Prostate gland (tissue), 2 donors: ENCODE measurements at regions of chr3 and their contacts with region 1.

Region 1: DNA sequence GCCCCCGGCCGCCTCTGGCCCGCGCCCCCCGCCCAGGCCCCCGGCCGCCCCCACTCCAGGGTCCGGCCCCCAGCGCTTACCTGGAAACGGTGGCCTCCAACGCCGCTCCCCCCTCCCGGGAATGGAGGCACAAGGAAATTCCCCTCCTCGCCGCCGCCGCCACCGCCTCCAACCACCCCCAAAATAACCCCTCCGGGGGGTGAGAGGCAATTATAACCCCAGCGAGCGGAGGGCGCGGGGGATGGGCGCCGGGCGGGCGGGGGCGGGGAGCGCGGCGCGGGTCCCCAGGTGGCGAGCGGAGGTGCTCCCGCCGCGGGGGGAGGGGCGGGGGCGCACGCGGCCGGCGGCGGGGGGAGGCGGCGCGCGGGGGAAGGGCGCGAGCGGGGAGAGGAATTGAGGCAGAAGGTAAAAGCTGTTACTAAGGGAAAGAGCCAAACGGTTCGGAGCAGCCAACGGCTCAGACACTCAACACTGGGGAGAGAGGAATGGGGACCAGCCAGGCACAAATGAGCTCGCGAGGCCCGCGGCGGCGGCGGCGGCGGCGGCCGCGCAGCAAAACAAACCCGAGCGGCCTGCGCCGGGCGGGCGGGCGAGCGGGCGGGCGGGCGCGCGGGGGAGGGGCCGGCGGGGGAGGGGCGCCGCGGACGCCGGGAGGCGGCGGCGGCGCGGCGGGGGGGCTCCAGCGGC is at the start of gene TBL1XR1:
- DNase-seq: peak; percentile 91
- H3K4me3 ChIP-seq: peak within 1 kb of the TSS; percentile 86 to 100
- H3K27ac ChIP-seq: peak within 1 kb of the TSS; percentile 97 to 99
- H3K4me1 ChIP-seq: no peaks in the 10 kb centered on the region
- H3K27me3 ChIP-seq: no peaks in the 10 kb centered on the region
- CTCF ChIP-seq: no peak
- POLR2A ChIP-seq: no peak
- total RNA-seq, gene TBL1XR1: 75.8 to 156 TPM

Region 2: DNA sequence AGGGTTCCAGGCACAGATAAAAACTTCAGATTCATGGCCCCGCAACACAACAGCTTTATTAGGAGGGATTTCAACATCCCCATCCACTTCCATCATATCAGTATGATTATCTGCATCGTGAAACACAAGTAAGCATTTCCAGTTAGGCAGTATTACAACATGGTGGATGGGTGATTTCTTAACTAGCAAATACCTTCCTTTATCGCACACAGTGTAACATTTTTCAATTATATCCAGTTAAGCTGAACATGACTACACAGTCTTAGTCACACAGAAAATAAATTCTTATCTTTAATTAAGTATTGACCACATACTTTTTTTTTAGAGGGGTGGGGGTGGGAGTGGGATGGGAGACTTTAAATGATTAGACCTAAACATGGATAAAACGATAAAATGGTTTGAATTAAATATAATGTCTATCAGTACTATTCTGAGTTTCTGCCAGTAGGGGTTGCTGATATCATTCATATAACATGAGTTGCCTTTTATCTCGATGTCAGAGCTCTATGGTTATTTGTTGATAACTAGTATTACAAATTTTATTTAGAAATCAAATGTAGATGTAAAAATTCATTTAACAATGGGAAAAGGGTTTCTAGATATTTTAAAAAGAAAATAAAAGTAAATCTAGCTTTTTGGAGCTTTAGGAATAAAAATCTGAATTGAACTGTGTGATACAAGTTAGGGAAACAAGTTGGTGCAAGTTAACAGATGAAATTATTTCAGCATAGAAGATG is 146.5 kb before region 1 on chr3:
- intact Hi-C with region 1: loop called (anchors 5 kb)
- DNase-seq: no peak
- H3K4me3 ChIP-seq: no peak overlapping the region
- H3K27ac ChIP-seq: no peak overlapping the region
- H3K4me1 ChIP-seq: peaks cover 10% of the 10 kb centered on the region
- H3K27me3 ChIP-seq: no peaks in the 10 kb centered on the region
- CTCF ChIP-seq: peak; percentile 22 to 79 (median 66)
- POLR2A ChIP-seq: no peak

Region 3: GRCh38 chr3:177294221-177294620 is 97.0 kb after region 1 on chr3:
- intact Hi-C with region 1: loop called (anchors 5 kb)
- DNase-seq: no peak
- H3K4me3 ChIP-seq: no peak overlapping the region
- H3K27ac ChIP-seq: no peak overlapping the region
- H3K4me1 ChIP-seq: no peaks in the 10 kb centered on the region
- H3K27me3 ChIP-seq: no peaks in the 10 kb centered on the region
- CTCF ChIP-seq: no peak
- POLR2A ChIP-seq: no peak

Region 4: DNA sequence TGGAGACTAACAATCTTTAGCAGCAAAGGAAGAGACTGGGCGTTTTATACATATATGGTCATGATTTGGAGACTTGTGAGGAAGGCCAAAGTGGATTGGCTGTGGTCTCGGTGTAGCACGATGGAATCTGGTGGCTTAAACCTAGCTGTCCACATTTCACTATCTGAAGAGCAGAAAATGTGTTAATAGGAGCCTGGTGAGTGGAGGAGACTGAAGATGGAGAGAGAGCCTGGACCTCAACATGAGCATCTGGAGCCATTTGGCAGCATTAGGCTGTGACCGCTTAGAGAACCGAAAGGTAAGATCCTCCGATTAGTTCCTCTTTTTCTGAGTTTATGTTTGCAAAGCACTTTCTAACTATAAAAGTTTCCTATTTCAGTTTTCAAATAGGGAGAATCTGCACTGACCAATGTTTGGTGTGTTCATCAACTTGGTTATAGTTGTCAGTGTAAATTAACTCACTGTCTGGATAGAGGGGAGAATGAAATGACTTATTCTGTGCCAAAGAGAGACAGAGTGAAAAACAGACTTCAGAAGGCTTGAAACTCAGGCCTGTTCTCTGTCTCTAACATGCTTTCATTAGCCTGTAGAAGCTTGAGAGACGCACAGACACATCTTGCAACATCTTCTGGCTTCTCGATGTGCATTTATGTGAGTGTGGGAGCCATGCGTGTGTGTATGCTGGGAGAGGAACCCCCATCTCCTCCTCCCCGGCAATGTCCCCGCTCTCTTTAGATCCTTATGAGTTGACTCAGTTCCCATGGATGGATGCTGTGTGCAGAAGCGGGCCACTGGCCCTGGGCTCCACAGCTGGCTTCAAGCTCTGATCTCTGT is 244.8 kb after region 1 on chr3:
- intact Hi-C with region 1: loop called (anchors 5 kb)
- DNase-seq: no peak
- H3K4me3 ChIP-seq: peak overlapping the region in 1 of 2 donors; percentile 12
- H3K27ac ChIP-seq: peak overlapping the region; percentile 57 to 66
- H3K4me1 ChIP-seq: no peaks in the 10 kb centered on the region
- H3K27me3 ChIP-seq: no peaks in the 10 kb centered on the region
- CTCF ChIP-seq: no peak
- POLR2A ChIP-seq: no peak

Region 5: GRCh38 chr3:177816667-177817208 is 619.6 kb after region 1 on chr3:
- intact Hi-C with region 1: loop called (anchors 10 kb)
- DNase-seq: peak; percentile 46
- H3K4me3 ChIP-seq: no peak overlapping the region
- H3K27ac ChIP-seq: no peak overlapping the region
- H3K4me1 ChIP-seq: peaks cover 7% of the 10 kb centered on the region
- H3K27me3 ChIP-seq: no peaks in the 10 kb centered on the region
- CTCF ChIP-seq: no peak
- POLR2A ChIP-seq: no peak

Region 6: DNA sequence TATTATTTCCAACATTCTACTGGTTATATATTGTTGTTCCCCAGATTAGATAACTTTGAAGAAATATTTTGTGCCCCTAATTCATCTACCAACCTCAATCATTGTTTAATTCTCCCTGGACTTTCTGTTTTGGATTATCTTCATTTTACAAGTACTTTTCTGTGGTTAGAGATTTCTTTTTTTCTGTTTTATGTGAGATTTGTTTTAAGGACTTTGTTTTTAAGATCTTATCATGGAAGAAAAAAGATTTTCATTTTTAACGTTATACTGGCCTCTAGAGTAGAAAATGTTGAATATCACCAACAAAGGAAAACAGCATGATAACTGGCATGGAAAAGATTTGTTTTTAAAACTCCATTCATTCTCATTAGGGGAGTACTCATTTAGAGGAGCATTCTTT is 1128.1 kb after region 1 on chr3:
- intact Hi-C with region 1: loop called (anchors 5 kb)
- DNase-seq: no peak
- H3K4me3 ChIP-seq: no peak overlapping the region
- H3K27ac ChIP-seq: peak overlapping the region in 1 of 2 donors; percentile 14
- H3K4me1 ChIP-seq: no peaks in the 10 kb centered on the region
- H3K27me3 ChIP-seq: no peaks in the 10 kb centered on the region
- CTCF ChIP-seq: peak in 3 of 4 experiments; percentile 40 to 69 (median 65)
- POLR2A ChIP-seq: no peak